ENCODE measurements at regions of chr7 and their contacts with region 1.

Region 1: DNA sequence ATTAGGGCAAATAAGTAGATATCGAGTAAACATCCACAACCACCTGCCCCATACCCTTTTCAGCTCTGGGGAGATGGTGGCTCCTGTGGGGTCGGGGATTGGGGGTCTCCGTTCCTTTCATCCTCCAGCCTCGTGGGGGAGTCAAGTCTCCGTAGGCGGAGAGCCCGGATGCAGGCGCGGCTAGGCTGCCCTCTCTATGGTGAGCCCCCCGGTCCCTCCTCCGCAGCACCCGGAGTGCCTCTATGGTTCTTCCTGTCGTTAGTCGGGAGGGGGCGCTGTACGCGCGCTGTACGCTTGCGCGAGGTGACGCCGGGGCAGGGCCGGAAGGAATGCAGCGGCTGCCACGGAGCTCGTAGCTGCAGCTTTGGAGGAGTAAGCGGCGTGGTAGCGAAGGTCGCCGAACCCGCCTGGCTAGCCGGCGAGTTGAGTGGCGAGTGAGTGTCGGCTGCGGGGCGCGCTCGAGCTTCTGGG is 14.8 kb upstream of the MMD2 start:
- DNase-seq: peak; percentile 93
- ATAC-seq: peak; percentile 98
- H3K4me3 Mint-ChIP-seq: peak overlapping the region; percentile 96
- H3K27ac Mint-ChIP-seq: peak overlapping the region; percentile 96
- H3K4me1 Mint-ChIP-seq: peaks cover 28% of the 10 kb centered on the region
- H3K27me3 Mint-ChIP-seq: no peaks in the 10 kb centered on the region
- CTCF ChIP-seq: peak; percentile 82

Region 2: GRCh38 chr7:4085937-4086691 is 887.6 kb before region 1 on chr7:
- CTCF ChIA-PET with region 1: no interaction called
- POLR2A ChIA-PET with region 1: no interaction called
- intact Hi-C with region 1: no loop called
- DNase-seq: peak; percentile 11
- ATAC-seq: peak; percentile 49
- H3K4me3 Mint-ChIP-seq: no peak overlapping the region
- H3K27ac Mint-ChIP-seq: no peak overlapping the region
- H3K4me1 Mint-ChIP-seq: peaks cover 6% of the 10 kb centered on the region
- H3K27me3 Mint-ChIP-seq: no peaks in the 10 kb centered on the region
- CTCF ChIP-seq: no peak

Region 3: DNA sequence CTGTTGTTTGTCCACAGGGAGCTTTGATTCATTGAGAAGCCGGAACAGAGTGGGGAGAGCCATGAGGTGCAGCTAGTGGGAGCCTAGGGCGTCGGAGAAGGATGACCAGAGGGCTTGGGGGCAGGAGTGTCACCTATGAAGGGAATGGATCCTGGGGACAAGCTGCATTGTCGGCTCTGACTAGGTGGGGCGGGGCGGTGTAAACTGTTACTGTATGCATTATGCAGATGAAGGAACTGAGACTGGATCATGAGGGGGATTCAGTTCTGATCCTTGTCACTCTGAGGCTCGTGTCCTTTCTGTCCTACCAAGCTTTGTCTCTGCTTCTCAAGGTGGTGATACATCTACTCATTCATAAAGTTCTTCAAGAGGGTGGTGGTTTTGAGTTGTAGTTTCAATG is 25.1 kb after region 1 on chr7:
- CTCF ChIA-PET with region 1: interaction called, 10 read pairs
- POLR2A ChIA-PET with region 1: interaction called, 5 read pairs
- intact Hi-C with region 1: no loop called
- DNase-seq: no peak
- ATAC-seq: no peak
- H3K4me3 Mint-ChIP-seq: no peak overlapping the region
- H3K27ac Mint-ChIP-seq: peak overlapping the region; percentile 74
- H3K4me1 Mint-ChIP-seq: peaks cover 19% of the 10 kb centered on the region
- H3K27me3 Mint-ChIP-seq: no peaks in the 10 kb centered on the region
- CTCF ChIP-seq: no peak

Region 4: GRCh38 chr7:5045558-5046396 is 72.0 kb after region 1 on chr7 and contains the start of gene RBAK:
- CTCF ChIA-PET with region 1: interaction called, 11 read pairs
- POLR2A ChIA-PET with region 1: no interaction called
- intact Hi-C with region 1: no loop called
- DNase-seq: peak; percentile 96
- ATAC-seq: peak; percentile 100
- H3K4me3 Mint-ChIP-seq: peak within 1 kb of the TSS; percentile 97
- H3K27ac Mint-ChIP-seq: peak within 1 kb of the TSS; percentile 90
- H3K4me1 Mint-ChIP-seq: peaks cover 39% of the 10 kb centered on the region
- H3K27me3 Mint-ChIP-seq: no peaks in the 10 kb centered on the region
- CTCF ChIP-seq: no peak
- total RNA-seq, gene RBAK: 15.4 to 17.1 TPM

Region 5: GRCh38 chr7:5083311-5083711 is 109.5 kb after region 1 on chr7:
- CTCF ChIA-PET with region 1: interaction called, 38 read pairs
- POLR2A ChIA-PET with region 1: no interaction called
- intact Hi-C with region 1: loop called (anchors 5 kb)
- DNase-seq: no peak
- ATAC-seq: no peak
- H3K4me3 Mint-ChIP-seq: no peak overlapping the region
- H3K27ac Mint-ChIP-seq: no peak overlapping the region
- H3K4me1 Mint-ChIP-seq: peaks cover 3% of the 10 kb centered on the region
- H3K27me3 Mint-ChIP-seq: peaks cover 2% of the 10 kb centered on the region
- CTCF ChIP-seq: no peak

Region 6: DNA sequence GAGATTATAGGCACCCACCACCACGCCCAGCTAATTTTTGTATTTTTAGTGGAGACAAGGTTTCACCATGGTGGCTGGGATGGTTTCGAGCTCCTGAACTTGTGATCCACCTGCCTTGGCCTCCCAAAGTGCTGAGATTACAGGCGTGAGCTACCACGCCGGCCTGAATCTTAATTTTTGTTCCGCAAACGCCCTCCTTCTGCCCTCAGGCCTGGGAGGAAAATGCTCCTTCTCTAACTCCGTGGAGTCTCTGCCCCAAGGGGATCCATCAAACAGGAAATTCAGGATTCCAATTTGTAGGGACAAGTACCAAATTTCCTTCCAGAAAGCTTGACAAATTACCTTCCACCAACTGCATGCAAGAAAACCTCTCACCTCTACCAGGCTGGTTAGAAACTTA is 115.1 kb after region 1 on chr7:
- CTCF ChIA-PET with region 1: interaction called, 38 read pairs
- POLR2A ChIA-PET with region 1: no interaction called
- intact Hi-C with region 1: loop called (anchors 5 kb)
- DNase-seq: no peak
- ATAC-seq: no peak
- H3K4me3 Mint-ChIP-seq: no peak overlapping the region
- H3K27ac Mint-ChIP-seq: no peak overlapping the region
- H3K4me1 Mint-ChIP-seq: peaks cover 3% of the 10 kb centered on the region
- H3K27me3 Mint-ChIP-seq: no peaks in the 10 kb centered on the region
- CTCF ChIP-seq: no peak

Region 7: DNA sequence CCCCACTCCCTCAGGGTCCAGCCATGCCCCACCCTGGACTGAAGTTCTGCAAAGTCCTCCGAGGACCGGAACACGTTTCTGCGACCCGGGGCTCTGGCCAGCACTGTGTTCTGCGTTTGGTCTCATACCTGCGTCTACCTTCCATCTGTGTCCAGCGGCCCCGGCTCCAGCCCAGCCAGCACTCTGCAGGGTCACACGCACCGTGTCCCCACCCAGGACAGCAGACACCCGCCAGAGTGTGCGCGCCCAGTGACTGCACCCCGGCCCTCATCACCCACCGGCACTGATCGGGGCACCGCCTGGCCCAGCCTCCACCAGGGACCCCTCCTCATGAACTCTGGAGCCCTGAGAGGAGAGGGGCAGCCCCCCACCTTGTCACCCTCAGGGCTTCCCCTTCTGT is 329.3 kb after region 1 on chr7:
- CTCF ChIA-PET with region 1: no interaction called
- POLR2A ChIA-PET with region 1: no interaction called
- intact Hi-C with region 1: no loop called
- DNase-seq: no peak
- ATAC-seq: no peak
- H3K4me3 Mint-ChIP-seq: no peak overlapping the region
- H3K27ac Mint-ChIP-seq: no peak overlapping the region
- H3K4me1 Mint-ChIP-seq: no peaks in the 10 kb centered on the region
- H3K27me3 Mint-ChIP-seq: peaks cover 4% of the 10 kb centered on the region
- CTCF ChIP-seq: no peak